CD4-positive, alpha-beta memory T cell (primary cell): ENCODE measurements at regions of chr7 and their contacts with region 1.

Region 1: DNA sequence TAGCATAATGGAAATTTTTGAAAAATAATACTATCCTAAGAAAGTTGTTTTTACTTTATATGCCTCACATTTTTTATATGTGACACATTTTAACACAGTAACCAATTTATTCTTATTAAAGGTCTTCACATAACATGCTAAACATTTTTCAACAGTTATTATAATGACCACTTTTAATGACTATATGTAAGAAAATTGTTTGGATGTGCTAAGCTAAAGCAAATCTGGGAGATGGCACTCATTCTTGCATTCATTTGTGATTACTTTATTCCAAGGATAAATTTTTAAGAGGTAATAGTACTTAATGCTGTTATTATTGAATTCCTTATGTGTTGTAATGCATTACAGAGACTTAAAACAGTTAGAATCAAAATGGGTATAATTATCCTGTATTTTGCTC is 88.1 kb downstream of the ANKIB1 start:
- DNase-seq: no peak
- H3K4me3 ChIP-seq: no peak overlapping the region
- H3K4me3 Mint-ChIP-seq: no peak overlapping the region
- H3K27ac ChIP-seq: no peak overlapping the region
- H3K27ac Mint-ChIP-seq: no peak overlapping the region
- H3K4me1 ChIP-seq: no peaks in the 10 kb centered on the region
- H3K4me1 Mint-ChIP-seq: no peaks in the 10 kb centered on the region
- H3K27me3 ChIP-seq: no peaks in the 10 kb centered on the region
- H3K27me3 Mint-ChIP-seq: no peaks in the 10 kb centered on the region

Region 2: DNA sequence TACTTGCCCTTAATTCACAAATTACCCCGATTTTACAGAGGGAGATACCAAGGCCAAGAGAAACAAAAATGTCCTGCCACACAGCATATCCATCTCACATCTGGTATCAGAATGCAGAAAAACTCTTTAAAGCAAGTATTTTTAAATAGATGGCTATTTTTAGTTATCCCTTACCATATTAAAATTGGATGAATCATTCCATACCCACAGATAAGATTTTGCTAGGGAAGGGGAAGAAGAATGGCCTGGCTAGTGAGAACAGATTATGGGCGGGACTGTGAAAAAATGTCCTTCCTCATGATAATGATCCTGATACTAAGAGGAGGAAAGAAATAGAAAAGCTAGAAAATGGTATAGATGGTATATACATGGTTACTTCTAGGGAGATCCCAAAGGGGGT is 32.9 kb after region 1 on chr7:
- CTCF ChIA-PET with region 1: no interaction called
- POLR2A ChIA-PET with region 1: no interaction called
- intact Hi-C with region 1: loop called (anchors 2 kb)
- DNase-seq: no peak
- H3K4me3 ChIP-seq: no peak overlapping the region
- H3K4me3 Mint-ChIP-seq: no peak overlapping the region
- H3K27ac ChIP-seq: no peak overlapping the region
- H3K27ac Mint-ChIP-seq: no peak overlapping the region
- H3K4me1 ChIP-seq: no peaks in the 10 kb centered on the region
- H3K4me1 Mint-ChIP-seq: peaks cover 0 to 4% (median under 1%) of the 10 kb centered on the region in 4 donors
- H3K27me3 ChIP-seq: no peaks in the 10 kb centered on the region
- H3K27me3 Mint-ChIP-seq: no peaks in the 10 kb centered on the region